ENCODE measurements at regions of chr11 and their contacts with region 1.

Region 1: GRCh38 chr11:3849297-3849874 is 6.1 kb upstream of the STIM1 start:
- DNase-seq: no peak

Region 2: GRCh38 chr11:3959015-3959919 is 109.9 kb after region 1 on chr11:
- intact Hi-C with region 1: no loop called
- DNase-seq: no peak

Region 3: DNA sequence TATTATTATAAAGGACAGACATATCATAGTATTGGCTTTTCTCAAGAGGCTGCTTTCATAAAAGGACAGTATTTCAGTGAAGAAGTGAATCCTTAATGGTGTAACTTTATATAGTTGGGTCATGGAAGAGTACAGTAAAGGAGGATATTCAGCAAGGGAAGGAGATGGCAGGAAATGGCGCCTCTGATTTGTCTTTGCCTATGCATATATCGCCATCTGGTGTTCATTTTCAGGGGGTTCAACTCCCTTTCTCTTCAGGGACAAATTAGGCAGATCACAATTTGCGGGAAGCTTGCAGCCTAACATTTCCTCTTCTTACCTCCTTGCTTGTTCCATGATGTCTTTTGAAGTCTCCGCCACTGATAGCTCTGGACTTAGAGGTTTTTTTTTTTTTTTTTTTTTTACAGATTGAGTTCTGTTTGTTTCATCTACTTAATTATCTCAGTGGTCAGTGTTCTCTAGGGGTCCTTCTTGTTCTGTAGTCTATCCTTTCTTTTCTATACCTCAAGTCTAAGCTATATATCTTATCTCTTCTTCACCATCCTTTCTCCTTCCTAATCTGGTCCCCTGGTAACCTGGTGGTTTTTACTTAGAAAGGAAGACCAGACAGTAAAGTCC is 223.4 kb after region 1 on chr11:
- intact Hi-C with region 1: loop called (anchors 2 to 5 kb)
- DNase-seq: no peak

Measured in posterior vena cava (tissue), 2 donors.